ENCODE measurements at regions of chr7 and their contacts with region 1.

Region 1: DNA sequence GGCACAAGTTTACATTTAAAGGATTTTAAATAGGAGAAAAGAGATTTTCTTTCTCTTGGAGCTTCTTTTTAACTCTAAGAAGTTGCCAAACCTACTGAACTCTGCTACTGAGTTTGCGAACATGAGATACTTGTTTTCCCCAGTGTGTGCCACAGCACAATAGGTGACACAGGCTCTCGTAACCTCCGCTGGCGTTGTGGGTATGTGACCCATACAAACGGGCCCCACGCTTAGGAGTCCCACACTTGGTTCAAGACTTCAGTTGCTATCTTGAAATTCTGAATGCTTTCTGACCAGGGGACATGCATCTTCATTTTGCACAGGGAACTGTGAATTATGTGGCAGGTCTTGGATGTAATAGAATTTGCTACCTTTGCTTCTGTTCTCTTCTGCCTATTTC is 31.8 kb upstream of the XRCC2 start:
- DNase-seq: no peak
- ATAC-seq: no peak
- H3K4me3 ChIP-seq: no peak overlapping the region
- H3K27ac ChIP-seq: no peak overlapping the region
- H3K4me1 ChIP-seq: peaks cover 22% of the 10 kb centered on the region
- CTCF ChIP-seq: no peak
- EP300 ChIP-seq: no peak
- POLR2A ChIP-seq: no peak
- RAD21 ChIP-seq: no peak

Region 2: DNA sequence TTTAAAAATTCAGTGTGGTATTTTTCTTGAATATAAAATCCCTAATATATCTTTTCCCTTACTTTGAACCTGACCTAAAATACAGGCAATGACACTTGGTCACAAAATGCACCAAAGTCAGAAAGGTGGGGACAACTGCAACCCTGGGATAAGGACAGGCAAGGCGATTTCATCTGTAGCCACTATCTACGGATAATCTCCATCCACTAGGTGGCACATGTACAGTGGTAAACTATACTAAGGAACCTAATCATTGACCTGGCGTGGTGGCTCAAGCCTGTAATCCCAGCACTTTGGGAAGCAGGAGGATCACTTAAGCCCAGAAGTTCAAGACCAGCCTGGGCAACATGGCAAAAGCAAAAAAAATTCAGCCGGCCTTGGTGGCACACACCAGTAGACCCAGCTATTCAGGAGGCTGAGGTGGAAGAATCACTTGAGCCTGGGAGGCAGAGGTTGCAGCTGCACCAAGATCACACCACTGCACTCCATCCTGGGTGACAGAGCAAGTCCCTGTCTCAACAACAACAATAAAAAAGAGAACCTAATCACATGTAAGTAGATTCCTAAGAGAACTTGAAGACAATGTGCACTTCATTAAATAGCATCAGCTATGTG is 370.9 kb before region 1 on chr7:
- CTCF ChIA-PET with region 1: interaction called, 11 read pairs
- POLR2A ChIA-PET with region 1: no interaction called
- DNase-seq: peak; percentile 53 to 71
- ATAC-seq: peak; percentile 97 to 98
- H3K4me3 ChIP-seq: no peak overlapping the region
- H3K27ac ChIP-seq: no peak overlapping the region
- H3K4me1 ChIP-seq: peaks cover 7% of the 10 kb centered on the region; the same call in 2 of the 3 replicates
- CTCF ChIP-seq: peak; percentile 70
- EP300 ChIP-seq: no peak
- POLR2A ChIP-seq: no peak
- RAD21 ChIP-seq: peak; percentile 68 to 75

Region 3: GRCh38 chr7:152664636-152665035 is 43.1 kb before region 1 on chr7:
- CTCF ChIA-PET with region 1: no interaction called
- POLR2A ChIA-PET with region 1: no interaction called
- DNase-seq: peak in 1 of 2 experiments; percentile 40
- ATAC-seq: peak in 1 of 2 experiments; percentile 63; a peak in 3 of 6 replicates
- H3K4me3 ChIP-seq: no peak overlapping the region
- H3K27ac ChIP-seq: peak overlapping the region in 1 of 2 experiments; percentile 35; a peak in 2 of 6 replicates
- H3K4me1 ChIP-seq: no peaks in the 10 kb centered on the region
- CTCF ChIP-seq: no peak
- EP300 ChIP-seq: no peak
- POLR2A ChIP-seq: no peak
- RAD21 ChIP-seq: no peak